PC-9 (cell line): ENCODE measurements at regions of chr20 and their contacts with region 1.

Region 1: DNA sequence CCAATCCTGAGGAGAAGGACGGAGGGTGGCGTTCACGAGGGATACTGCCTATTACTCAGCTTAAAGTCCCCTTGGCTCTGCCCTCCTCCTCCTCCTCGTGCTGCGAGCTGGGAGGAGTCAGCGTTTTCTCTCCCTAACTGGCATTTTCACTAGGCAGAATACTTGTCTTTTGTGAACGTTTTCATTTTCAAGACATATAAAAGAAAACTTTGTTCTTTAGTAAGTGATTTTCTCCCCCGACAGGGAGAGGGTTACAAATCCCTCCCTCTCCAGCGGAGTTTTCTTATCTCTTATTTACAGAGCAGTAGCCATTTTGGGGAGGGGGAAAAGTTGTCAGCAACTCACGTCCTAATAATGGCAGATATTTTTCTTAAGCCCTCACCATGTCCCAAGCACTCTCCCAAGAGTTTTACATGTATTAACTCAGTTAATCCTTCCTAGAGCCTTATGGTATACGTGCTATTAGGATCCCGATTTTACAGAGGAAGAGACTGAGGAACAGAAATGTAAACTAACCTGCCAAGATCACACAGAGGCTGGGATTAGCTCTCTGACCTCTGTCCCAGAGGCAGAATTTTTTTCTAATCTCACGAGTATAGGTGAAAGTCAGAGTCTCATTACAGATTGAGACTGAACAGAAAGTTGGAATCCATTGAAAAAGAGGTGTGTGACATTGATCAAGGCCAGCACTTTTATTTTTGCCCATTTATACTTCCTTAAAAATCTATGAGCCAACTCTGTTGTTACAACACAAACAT is 30.0 kb upstream of the ZNF217 start:
- DNase-seq: peak; percentile 62 to 69
- H3K4me3 ChIP-seq: peak overlapping the region; percentile 58
- H3K27ac ChIP-seq: peak overlapping the region; percentile 98
- H3K4me1 ChIP-seq: peaks cover 57% of the 10 kb centered on the region
- H3K27me3 ChIP-seq: no peaks in the 10 kb centered on the region
- CTCF ChIP-seq: no peak

Region 2: DNA sequence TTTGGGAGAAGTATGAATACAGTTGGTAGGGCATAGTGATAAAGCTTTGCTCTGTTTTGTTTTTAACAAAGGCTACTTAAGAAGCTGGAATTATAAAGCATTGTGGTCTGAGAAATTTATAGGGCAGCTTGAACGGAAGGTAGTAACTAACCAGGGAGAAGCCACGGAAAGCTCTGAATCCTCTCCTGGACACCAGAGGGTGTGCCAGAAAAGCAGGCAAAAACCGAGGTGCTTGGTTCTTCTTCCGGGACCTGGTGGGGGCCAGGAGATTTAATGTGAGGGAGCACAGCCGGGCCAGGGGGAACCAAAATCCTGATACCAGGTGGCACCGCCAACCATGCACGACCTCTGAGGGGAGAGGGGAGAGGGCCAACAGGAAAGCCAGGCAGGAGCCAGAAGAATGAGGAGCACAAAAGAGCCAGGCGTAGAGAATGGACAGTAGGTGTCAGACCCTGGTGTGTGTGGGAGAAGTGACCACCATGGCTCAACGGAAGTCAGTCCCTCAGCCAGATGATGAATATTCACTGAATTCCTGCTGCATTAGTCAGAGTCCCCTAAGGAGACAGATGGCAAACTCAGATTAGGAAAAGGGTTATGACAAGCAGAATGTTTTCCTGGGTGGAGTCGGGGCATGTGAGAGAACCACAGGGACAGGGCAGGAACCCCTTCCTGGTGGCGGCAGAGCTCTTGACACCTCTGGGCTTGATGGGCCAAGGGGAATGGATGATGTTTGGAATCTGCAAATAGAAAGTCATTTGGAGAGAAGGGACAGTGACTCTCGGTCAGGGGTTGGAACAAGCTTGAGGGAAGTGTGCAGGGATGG is 292.3 kb before region 1 on chr20:
- CTCF ChIA-PET with region 1: no interaction called
- POLR2A ChIA-PET with region 1: no interaction called
- intact Hi-C with region 1: no loop called
- DNase-seq: no peak
- H3K4me3 ChIP-seq: no peak overlapping the region
- H3K27ac ChIP-seq: no peak overlapping the region
- H3K4me1 ChIP-seq: no peaks in the 10 kb centered on the region
- H3K27me3 ChIP-seq: peaks cover 60% of the 10 kb centered on the region
- CTCF ChIP-seq: no peak

Region 3: GRCh38 chr20:53578492-53579222 is 45.0 kb before region 1 on chr20:
- CTCF ChIA-PET with region 1: no interaction called
- POLR2A ChIA-PET with region 1: interaction called, 4 read pairs
- intact Hi-C with region 1: loop called (anchors 2 kb)
- DNase-seq: peak; percentile 61 to 77
- H3K4me3 ChIP-seq: peak overlapping the region; percentile 49
- H3K27ac ChIP-seq: peak overlapping the region; percentile 91
- H3K4me1 ChIP-seq: peaks cover 64% of the 10 kb centered on the region
- H3K27me3 ChIP-seq: no peaks in the 10 kb centered on the region
- CTCF ChIP-seq: peak; percentile 96

Region 4: DNA sequence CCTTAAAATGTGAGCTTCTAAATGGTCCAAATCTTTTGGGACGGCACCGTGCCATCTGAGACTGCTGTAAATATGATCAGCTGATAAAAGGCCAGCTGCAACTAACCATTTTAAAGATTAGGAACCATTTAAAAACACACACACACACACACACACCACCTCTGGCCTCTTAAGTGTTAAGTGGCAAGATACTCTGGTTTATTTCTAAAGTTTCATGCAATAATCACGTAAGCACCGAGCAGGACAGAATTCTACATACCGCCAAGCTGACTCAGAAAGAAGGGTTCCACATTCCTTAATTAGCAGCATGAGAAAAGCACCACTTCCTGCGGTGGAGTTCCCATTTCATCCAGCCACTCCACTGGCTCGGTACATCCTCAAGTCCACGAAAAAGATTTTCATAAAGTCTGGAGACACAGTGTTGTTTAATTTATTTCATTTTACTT is 12.2 kb before region 1 on chr20:
- CTCF ChIA-PET with region 1: no interaction called
- POLR2A ChIA-PET with region 1: no interaction called
- intact Hi-C with region 1: no loop called
- DNase-seq: peak; percentile 52 to 90
- H3K4me3 ChIP-seq: no peak overlapping the region
- H3K27ac ChIP-seq: peak overlapping the region; percentile 90
- H3K4me1 ChIP-seq: peaks cover 32% of the 10 kb centered on the region
- H3K27me3 ChIP-seq: no peaks in the 10 kb centered on the region
- CTCF ChIP-seq: no peak

Region 5: GRCh38 chr20:53643031-53643832 is 19.6 kb after region 1 on chr20:
- CTCF ChIA-PET with region 1: no interaction called
- POLR2A ChIA-PET with region 1: interaction called, 25 read pairs
- intact Hi-C with region 1: loop called (anchors 1 kb)
- DNase-seq: peak; percentile 73 to 98
- H3K4me3 ChIP-seq: peak overlapping the region; percentile 26
- H3K27ac ChIP-seq: peak overlapping the region; percentile 94
- H3K4me1 ChIP-seq: peaks cover 39% of the 10 kb centered on the region
- H3K27me3 ChIP-seq: no peaks in the 10 kb centered on the region
- CTCF ChIP-seq: no peak; the same call in 1 of the 2 replicates

Region 6: DNA sequence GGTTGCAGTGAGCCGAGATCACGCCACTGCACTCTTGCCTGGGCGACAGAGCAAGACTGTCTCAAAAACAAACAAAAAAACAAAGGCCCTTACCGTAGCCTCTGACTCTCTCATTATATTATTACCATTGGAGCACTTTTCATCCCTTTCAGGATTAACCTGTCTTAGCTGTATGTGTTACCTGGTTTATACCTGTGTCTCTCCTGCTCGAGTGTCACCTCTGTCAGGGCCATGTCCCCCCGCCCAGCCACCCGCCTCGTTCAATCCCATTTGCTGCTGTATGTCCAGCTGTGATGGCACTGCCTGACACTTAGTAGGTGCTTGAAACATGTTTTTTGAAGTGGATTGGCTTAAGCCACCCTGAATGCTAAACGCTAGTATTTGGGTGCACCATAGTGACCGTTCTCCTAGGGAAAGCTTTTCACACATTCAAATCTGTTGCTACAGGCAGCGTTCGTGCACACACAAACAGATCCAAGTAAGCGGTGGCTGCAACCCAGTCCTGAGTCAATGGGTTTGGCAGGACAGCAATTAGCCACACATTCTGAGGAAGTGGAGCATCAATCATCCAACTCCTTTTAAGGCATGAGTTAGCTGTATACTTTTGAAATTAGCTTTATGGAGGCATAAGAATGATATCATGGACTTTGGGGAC is 68.9 kb after region 1 on chr20:
- CTCF ChIA-PET with region 1: no interaction called
- POLR2A ChIA-PET with region 1: no interaction called
- intact Hi-C with region 1: loop called (anchors 5 kb)
- DNase-seq: no peak
- H3K4me3 ChIP-seq: no peak overlapping the region
- H3K27ac ChIP-seq: peak overlapping the region; percentile 82
- H3K4me1 ChIP-seq: peaks cover 42% of the 10 kb centered on the region
- H3K27me3 ChIP-seq: no peaks in the 10 kb centered on the region
- CTCF ChIP-seq: no peak

Region 7: DNA sequence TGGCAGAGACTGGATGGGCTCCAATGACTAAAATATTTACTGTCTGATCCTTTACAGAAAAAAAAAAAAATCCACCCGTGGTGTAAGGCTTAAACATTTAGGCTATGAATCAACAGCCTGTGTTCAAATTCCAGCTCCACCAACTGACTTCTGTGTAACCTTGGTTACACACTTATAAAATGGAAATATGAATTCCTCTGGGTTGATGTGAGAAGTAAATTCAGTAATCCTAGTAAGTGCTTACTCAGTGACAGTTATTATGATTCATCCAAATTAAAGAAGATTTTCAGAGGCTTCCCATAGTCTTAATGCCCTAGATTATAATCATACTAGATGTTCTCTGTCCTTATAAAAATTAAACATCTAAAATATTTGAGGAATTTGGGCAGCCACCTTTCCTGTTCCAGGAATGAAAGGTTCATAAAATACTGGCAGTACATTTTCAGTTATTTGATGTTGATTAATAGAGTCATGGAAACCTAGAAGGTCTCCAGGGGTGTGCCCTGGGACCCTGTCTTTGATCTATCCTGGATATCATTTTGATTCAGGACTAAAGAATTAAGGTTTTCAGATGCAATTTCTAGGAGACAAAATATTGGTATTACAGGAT is 150.3 kb after region 1 on chr20:
- CTCF ChIA-PET with region 1: interaction called, 6 read pairs
- POLR2A ChIA-PET with region 1: no interaction called
- intact Hi-C with region 1: loop called (anchors 1 kb)
- DNase-seq: peak; percentile 37 to 99
- H3K4me3 ChIP-seq: no peak overlapping the region
- H3K27ac ChIP-seq: peak overlapping the region; percentile 93
- H3K4me1 ChIP-seq: peaks cover 41% of the 10 kb centered on the region
- H3K27me3 ChIP-seq: no peaks in the 10 kb centered on the region
- CTCF ChIP-seq: no peak

Region 8: GRCh38 chr20:53786445-53787267 is 163.0 kb after region 1 on chr20:
- CTCF ChIA-PET with region 1: no interaction called
- POLR2A ChIA-PET with region 1: no interaction called
- intact Hi-C with region 1: loop called (anchors 5 kb)
- DNase-seq: peak; percentile 44 to 97
- H3K4me3 ChIP-seq: peak overlapping the region; percentile 40; the same call in 1 of the 2 replicates
- H3K27ac ChIP-seq: peak overlapping the region; percentile 98
- H3K4me1 ChIP-seq: peaks cover 68% of the 10 kb centered on the region
- H3K27me3 ChIP-seq: no peaks in the 10 kb centered on the region
- CTCF ChIP-seq: no peak; the same call in 1 of the 2 replicates